Breast epithelium (tissue), 4 donors: ENCODE measurements at regions of chr1 and their contacts with region 1.

Region 1: GRCh38 chr1:225447650-225448089 is 19.8 kb upstream of the LBR start:
- DNase-seq: no peak
- H3K4me3 ChIP-seq: peak overlapping the region in 1 of 3 donors; percentile 22
- H3K27ac ChIP-seq: peak overlapping the region in 1 of 2 donors; percentile 54
- H3K4me1 ChIP-seq: peaks cover 5 to 8% of the 10 kb centered on the region in 2 donors
- H3K27me3 ChIP-seq: no peaks in the 10 kb centered on the region
- CTCF ChIP-seq: no peak
- POLR2A ChIP-seq: no peak

Region 2: DNA sequence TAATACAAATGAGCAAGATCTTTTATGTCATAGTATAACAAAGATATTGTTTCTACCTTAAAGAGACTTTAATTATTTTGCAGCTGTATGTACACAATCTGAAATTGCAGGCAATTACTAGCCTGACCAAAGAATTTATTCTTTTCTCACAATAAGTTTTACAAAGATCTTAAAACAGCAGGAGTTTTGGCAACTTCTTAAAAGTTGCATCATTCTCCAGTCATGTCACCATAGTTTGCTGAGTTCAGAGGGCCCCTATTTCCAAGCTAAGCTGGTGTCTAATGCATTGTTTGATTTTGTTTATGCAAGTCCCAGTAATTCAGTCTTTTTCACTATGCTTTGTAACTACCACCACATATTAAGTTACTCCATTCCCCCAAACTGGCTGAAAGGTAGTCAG is 403.4 kb before region 1 on chr1:
- intact Hi-C with region 1: no loop called
- DNase-seq: no peak
- H3K4me3 ChIP-seq: no peak overlapping the region
- H3K27ac ChIP-seq: no peak overlapping the region
- H3K4me1 ChIP-seq: no peaks in the 10 kb centered on the region
- H3K27me3 ChIP-seq: no peaks in the 10 kb centered on the region
- CTCF ChIP-seq: no peak
- POLR2A ChIP-seq: no peak

Region 3: GRCh38 chr1:225070972-225071371 is 376.7 kb before region 1 on chr1:
- intact Hi-C with region 1: loop called (anchors 5 kb)
- DNase-seq: no peak
- H3K4me3 ChIP-seq: no peak overlapping the region
- H3K27ac ChIP-seq: no peak overlapping the region
- H3K4me1 ChIP-seq: no peaks in the 10 kb centered on the region
- H3K27me3 ChIP-seq: no peaks in the 10 kb centered on the region
- CTCF ChIP-seq: no peak
- POLR2A ChIP-seq: no peak

Region 4: DNA sequence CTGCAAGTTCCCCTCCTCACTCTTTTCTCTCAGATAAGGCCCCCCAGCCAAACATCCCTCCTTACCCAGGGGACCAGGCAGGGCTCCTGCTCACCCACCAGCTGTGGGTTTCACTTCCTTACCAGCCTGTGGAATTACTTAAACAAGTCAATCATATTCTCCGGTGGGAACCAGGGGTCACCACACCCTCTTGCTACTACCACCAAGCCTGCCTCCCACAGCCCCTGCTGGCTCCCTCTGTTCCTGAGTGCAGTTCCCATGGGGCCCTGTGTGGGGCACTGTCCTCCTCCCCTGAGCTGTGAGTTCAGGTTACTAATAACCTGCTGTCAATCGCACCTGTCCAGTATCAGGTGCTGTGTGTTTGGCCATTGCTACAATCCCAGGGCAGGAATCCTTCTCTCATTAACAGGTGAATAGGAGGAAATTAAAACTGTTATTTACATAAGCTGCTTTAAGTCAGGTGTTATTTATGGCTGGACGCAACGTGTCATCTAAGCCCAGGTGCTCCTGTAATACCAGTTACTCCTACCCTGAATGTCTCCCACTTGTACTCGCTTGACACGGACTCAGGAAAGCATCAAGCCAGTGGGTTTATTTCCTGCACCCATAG is 33.3 kb after region 1 on chr1:
- intact Hi-C with region 1: no loop called
- DNase-seq: peak; percentile 43 to 69
- H3K4me3 ChIP-seq: no peak overlapping the region
- H3K27ac ChIP-seq: no peak overlapping the region
- H3K4me1 ChIP-seq: no peaks in the 10 kb centered on the region
- H3K27me3 ChIP-seq: no peaks in the 10 kb centered on the region
- CTCF ChIP-seq: peak in 2 of 3 donors; percentile 59 to 79
- POLR2A ChIP-seq: no peak

Region 5: GRCh38 chr1:226293553-226293920 is 845.9 kb after region 1 on chr1:
- intact Hi-C with region 1: no loop called
- DNase-seq: no peak
- H3K4me3 ChIP-seq: no peak overlapping the region
- H3K27ac ChIP-seq: no peak overlapping the region
- H3K4me1 ChIP-seq: no peaks in the 10 kb centered on the region
- H3K27me3 ChIP-seq: no peaks in the 10 kb centered on the region
- CTCF ChIP-seq: no peak
- POLR2A ChIP-seq: no peak